Activated CD4-positive, alpha-beta memory T cell treated with anti-CD3 and anti-CD28 coated beads, Interleukin-2, amount 10 ng/mL, durations not matched to agents 7 days and 5 days (primary cell): ENCODE measurements at regions of chr11 and their contacts with region 1.

Region 1: GRCh38 chr11:44095506-44096394 is at the start of gene EXT2:
- DNase-seq: peak; percentile 88
- H3K4me3 Mint-ChIP-seq: peak within 1 kb of the TSS; percentile 81
- H3K27ac Mint-ChIP-seq: peak within 1 kb of the TSS; percentile 19
- H3K4me1 Mint-ChIP-seq: peaks cover 21% of the 10 kb centered on the region
- H3K27me3 Mint-ChIP-seq: no peaks in the 10 kb centered on the region
- total RNA-seq, gene EXT2: 24.5 to 26.0 TPM

Region 2: DNA sequence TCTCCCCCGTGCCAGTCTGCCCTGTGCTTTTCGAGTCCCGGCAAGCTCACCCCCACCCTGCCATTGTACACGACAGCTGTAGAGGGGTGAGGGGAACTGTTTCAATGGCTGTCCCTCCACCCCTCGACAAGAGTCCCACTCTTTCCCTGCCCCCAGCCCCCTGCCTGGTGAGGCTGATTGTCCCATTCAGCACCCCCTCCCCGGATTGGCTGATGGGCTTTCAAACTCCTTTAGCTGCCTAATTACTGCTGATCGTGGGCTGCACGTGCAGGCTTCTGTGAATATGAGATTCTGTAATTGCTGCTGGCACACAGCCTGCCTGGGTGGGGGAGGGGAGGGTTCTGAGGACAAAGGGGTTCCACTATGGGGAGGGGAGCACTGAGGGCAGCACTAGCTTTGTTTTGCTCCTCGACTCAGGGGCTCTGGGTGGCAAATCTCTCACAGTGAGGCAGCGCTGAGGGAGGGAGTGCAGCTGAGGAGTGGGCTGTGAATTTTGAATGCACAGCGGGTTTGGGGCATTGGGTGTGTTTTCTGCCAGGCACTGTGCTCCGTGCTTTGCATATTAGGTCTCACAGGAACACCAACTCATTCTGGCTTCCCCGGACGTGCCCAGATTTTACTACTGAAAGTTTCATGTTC is 90.6 kb before region 1 on chr11:
- CTCF ChIA-PET with region 1: no interaction called
- POLR2A ChIA-PET with region 1: no interaction called
- DNase-seq: no peak
- H3K4me3 Mint-ChIP-seq: no peak overlapping the region
- H3K27ac Mint-ChIP-seq: no peak overlapping the region
- H3K4me1 Mint-ChIP-seq: no peaks in the 10 kb centered on the region
- H3K27me3 Mint-ChIP-seq: no peaks in the 10 kb centered on the region

Region 3: DNA sequence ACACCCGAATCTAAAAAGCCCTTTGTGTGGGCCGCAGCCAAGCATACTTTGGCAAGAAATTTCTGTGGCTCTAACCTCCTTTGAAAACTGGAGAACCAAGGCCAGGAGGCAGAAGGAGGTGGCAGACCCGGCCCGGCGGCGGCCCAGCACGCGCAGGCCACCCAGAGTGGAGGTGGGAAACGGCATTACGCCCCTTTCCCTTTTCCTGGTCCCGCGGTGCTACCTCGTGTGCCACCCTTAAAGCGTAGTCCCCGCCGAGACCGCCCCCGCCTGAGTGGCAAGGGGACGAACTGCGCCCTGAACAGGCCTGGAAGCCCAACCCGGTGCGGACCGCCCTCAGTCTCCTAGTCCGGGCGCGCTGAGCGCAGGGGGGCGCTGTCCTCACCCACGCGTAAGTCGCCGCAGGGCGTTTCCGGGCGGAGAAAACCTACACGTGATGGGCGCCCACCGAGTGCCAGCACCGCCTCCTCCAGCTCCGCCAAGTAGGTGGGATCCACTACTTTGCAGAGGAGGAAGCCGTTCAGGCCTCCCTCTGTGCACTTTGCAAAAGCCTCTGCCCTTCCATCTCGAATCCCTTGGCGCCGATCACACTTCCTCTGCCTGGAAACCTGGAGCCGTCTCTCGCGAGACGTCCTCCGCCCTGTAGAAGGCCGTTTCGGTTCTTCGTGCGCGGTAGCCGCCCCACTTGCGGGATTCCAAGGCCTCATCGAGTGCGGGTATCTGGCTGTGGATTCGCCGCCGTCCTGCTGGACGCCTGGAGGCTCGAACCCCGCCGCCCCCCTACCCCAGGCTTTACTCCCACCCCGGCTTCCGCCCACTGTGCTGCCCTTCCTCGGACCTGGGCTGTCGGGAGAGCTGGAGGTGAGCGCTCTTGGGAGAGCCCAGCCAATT is 29.7 kb before region 1 on chr11 and contains the start of gene ACCS:
- CTCF ChIA-PET with region 1: interaction called, 67 read pairs
- POLR2A ChIA-PET with region 1: interaction called, 6 read pairs
- DNase-seq: peak; percentile 92
- H3K4me3 Mint-ChIP-seq: peak within 1 kb of the TSS; percentile 81
- H3K27ac Mint-ChIP-seq: peak within 1 kb of the TSS; percentile 82
- H3K4me1 Mint-ChIP-seq: peaks cover 41% of the 10 kb centered on the region
- H3K27me3 Mint-ChIP-seq: no peaks in the 10 kb centered on the region
- total RNA-seq, gene ACCS: 38.8 to 41.1 TPM

Region 4: GRCh38 chr11:44083906-44084305 is 11.8 kb before region 1 on chr11:
- CTCF ChIA-PET with region 1: interaction called, 20 read pairs
- POLR2A ChIA-PET with region 1: no interaction called
- DNase-seq: no peak
- H3K4me3 Mint-ChIP-seq: no peak overlapping the region
- H3K27ac Mint-ChIP-seq: no peak overlapping the region
- H3K4me1 Mint-ChIP-seq: peaks cover 12% of the 10 kb centered on the region
- H3K27me3 Mint-ChIP-seq: no peaks in the 10 kb centered on the region

Region 5: DNA sequence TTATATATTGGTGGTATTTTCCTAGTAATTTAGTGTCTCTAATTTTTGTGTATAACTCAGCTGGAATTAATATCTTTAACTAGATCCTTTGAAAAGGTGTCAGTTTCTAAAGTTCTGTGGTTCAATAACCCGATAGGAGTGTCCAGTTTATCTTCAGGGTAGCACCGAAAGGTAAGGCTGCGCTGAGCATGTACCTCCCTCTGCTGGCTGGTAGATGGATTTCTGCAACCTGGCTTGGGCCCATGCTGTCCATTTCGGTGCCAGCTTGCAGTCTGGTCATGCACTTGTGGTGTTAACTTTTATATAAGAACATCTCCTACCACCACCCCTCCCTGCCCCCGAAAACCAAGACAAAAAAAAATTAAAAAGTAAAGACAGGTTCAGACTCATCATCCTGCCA is 24.4 kb after region 1 on chr11:
- CTCF ChIA-PET with region 1: interaction called, 13 read pairs
- POLR2A ChIA-PET with region 1: no interaction called
- DNase-seq: no peak
- H3K4me3 Mint-ChIP-seq: no peak overlapping the region
- H3K27ac Mint-ChIP-seq: no peak overlapping the region
- H3K4me1 Mint-ChIP-seq: no peaks in the 10 kb centered on the region
- H3K27me3 Mint-ChIP-seq: no peaks in the 10 kb centered on the region

Region 6: GRCh38 chr11:44538375-44539054 is 442.8 kb after region 1 on chr11:
- CTCF ChIA-PET with region 1: interaction called, 14 read pairs
- POLR2A ChIA-PET with region 1: no interaction called
- DNase-seq: peak; percentile 78
- H3K4me3 Mint-ChIP-seq: no peak overlapping the region
- H3K27ac Mint-ChIP-seq: no peak overlapping the region
- H3K4me1 Mint-ChIP-seq: no peaks in the 10 kb centered on the region
- H3K27me3 Mint-ChIP-seq: peaks cover 3% of the 10 kb centered on the region